ENCODE measurements at regions of chr18 and their contacts with region 1.

Region 1: GRCh38 chr18:61901323-61901986 is 8.6 kb upstream of the RNF152 start:
- DNase-seq: no peak
- ATAC-seq: peak; percentile 50 to 79 (median 71)
- H3K4me3 ChIP-seq: no peak overlapping the region
- H3K27ac ChIP-seq: no peak overlapping the region
- H3K4me1 ChIP-seq: peaks cover 0 to 6% (median under 1%) of the 10 kb centered on the region in 9 donors
- H3K27me3 ChIP-seq: peaks cover 0 to 15% (median 0%) of the 10 kb centered on the region in 7 donors
- CTCF ChIP-seq: peak; percentile 79 to 96 (median 92)

Region 2: DNA sequence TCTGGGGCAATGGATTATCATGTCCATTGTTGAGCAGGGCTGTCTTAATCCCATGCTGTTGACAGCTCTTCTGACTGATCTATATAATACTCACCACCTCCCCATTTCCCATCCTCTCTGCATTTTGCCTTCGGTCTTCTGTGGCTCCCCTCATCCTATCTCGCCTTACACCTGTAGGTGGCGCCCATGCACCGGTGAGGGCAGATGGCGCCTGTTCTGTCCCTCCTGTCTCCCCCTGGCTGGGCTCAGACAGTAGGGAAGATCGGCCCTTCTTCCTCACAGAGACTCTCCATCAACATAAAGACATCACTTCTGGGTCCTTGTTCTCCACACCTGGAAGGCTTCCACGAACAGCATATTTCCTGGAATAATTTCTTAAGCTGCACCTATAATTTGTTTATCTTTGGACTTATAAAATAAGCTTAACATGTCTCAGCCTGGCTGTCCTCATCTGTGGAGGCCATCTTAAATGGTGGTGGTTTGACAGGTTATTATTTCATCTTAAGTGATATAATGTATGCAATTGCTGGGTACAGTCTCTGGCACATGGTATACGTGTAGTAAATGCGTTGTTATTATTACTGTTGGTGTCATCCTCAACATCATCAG is 579.1 kb before region 1 on chr18:
- intact Hi-C with region 1: loop called in 1 of 10 experiments (anchors 5 kb)
- DNase-seq: peak; percentile 41 to 58
- ATAC-seq: peak in 6 of 8 donors; percentile 62 to 90 (median 72)
- H3K4me3 ChIP-seq: no peak overlapping the region
- H3K27ac ChIP-seq: no peak overlapping the region
- H3K4me1 ChIP-seq: no peaks in the 10 kb centered on the region
- H3K27me3 ChIP-seq: peaks cover 0 to 4% (median 0%) of the 10 kb centered on the region in 7 donors
- CTCF ChIP-seq: peak; percentile 29 to 77 (median 72)

Region 3: GRCh38 chr18:61551586-61551985 is 349.9 kb before region 1 on chr18:
- intact Hi-C with region 1: loop called in 9 of 10 experiments (anchors 2 to 10 kb)
- DNase-seq: peak in 1 of 2 donors; percentile 77
- ATAC-seq: peak; percentile 65 to 92 (median 74)
- H3K4me3 ChIP-seq: no peak overlapping the region
- H3K27ac ChIP-seq: peak overlapping the region in 3 of 10 donors; percentile 16 to 36 (median 17)
- H3K4me1 ChIP-seq: peaks cover 0 to 11% (median 4%) of the 10 kb centered on the region in 9 donors
- H3K27me3 ChIP-seq: no peaks in the 10 kb centered on the region
- CTCF ChIP-seq: peak; percentile 73 to 90 (median 88)

Region 4: GRCh38 chr18:61635901-61636528 is 265.4 kb before region 1 on chr18:
- intact Hi-C with region 1: loop called in 3 of 10 experiments (anchors 2 to 5 kb)
- DNase-seq: peak; percentile 32 to 57
- ATAC-seq: peak; percentile 77 to 89 (median 85)
- H3K4me3 ChIP-seq: peak overlapping the region in 4 of 10 donors; percentile 9 to 21 (median 12)
- H3K27ac ChIP-seq: peak overlapping the region in 9 of 10 donors; percentile 1 to 73 (median 66)
- H3K4me1 ChIP-seq: peaks cover 0 to 24% (median 10%) of the 10 kb centered on the region in 9 donors
- H3K27me3 ChIP-seq: no peaks in the 10 kb centered on the region
- CTCF ChIP-seq: peak; percentile 87 to 95 (median 91)

Region 5: DNA sequence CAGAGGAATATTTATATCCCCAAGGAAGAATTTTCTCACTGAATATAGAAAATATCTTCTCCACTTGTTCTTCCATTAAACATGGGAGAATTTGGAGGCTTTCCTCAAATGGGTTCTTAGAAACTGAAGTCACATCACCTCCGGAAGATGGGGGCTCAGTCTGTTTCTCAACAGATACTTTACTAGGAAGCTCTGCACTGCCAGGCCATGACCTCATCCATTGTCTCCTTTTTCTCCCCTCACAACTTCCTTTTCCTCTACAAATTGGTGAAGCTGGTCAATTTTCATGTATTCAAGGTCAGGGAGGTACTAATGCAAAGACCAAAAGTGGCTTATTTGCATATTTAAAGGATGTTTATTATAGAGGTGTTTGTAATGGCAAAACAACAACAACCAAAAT is 181.8 kb before region 1 on chr18:
- intact Hi-C with region 1: no loop called
- DNase-seq: no peak
- ATAC-seq: peak in 2 of 8 donors; percentile 34 to 44
- H3K4me3 ChIP-seq: no peak overlapping the region
- H3K27ac ChIP-seq: peak overlapping the region in 1 of 10 donors; percentile 41
- H3K4me1 ChIP-seq: peaks cover 0 to 14% (median 0%) of the 10 kb centered on the region in 9 donors
- H3K27me3 ChIP-seq: no peaks in the 10 kb centered on the region
- CTCF ChIP-seq: no peak

Region 6: GRCh38 chr18:62026586-62026985 is 125.1 kb after region 1 on chr18:
- intact Hi-C with region 1: loop called in 1 of 10 experiments (anchors 10 kb)
- DNase-seq: no peak
- ATAC-seq: no peak
- H3K4me3 ChIP-seq: no peak overlapping the region
- H3K27ac ChIP-seq: no peak overlapping the region
- H3K4me1 ChIP-seq: peaks cover 0 to 8% (median 0%) of the 10 kb centered on the region in 9 donors
- H3K27me3 ChIP-seq: peaks cover 0 to 7% (median 0%) of the 10 kb centered on the region in 7 donors
- CTCF ChIP-seq: no peak